Activated T-helper 1 cell treated with anti-CD3 and anti-CD28 coated beads, Interleukin-12 subunit alpha, Interleukin-12 subunit beta, Interleukin-2, Interleukin-4 antibody, amounts not matched to agents 30 ng/mL and 10 ng/mL and 1 ng/mL, durations not matched to agents 14 hours and 24 hours and 36 hours (primary cell): ENCODE measurements at regions of chr15 and their contacts with region 1.

Region 1: DNA sequence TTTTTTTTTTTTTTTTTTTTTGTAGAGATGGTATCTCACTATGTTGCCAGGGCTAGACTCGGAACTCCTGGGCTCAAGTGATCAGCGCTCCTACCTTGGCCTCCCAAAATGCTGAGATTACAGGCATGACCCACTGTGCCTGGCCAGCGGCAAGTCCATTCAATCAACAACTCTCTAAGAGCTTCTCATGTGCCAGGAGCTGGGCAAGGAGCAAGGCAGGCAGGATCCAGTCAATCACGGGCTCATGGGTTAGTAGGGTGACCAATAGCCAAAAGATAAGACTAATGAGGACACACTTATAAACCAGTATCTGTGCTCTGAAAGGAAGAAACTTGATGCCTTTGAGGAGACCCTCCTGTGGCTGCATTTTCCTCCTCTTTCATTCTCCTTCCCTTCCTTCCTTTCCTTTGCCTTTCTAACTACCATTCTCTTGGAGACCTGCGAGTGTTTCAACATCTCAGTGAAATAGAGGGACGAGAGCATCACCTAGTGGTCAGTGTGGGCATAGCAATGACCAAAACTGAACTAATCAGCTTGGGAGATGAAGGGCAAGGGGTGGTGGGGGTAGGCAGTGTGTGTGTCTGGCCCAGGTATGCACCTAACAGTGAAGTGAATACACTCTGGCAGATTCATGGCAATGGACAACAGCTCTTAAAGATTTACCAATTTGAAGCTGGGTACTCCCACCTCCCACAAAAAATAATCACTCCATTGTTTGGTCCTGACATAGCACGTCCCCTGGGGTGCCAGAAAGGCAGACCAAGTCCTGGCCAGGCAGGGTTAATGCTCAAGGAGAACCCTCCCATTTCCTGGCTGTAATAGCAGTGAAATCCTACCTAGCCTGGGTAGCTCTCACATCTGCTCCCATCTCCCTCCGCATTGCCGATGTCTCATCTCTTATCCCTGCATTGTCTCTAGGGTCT is 6.2 kb downstream of the RPP25 start:
- DNase-seq: peak; percentile 71
- H3K4me3 Mint-ChIP-seq: no peak overlapping the region
- H3K27ac Mint-ChIP-seq: no peak overlapping the region
- H3K4me1 Mint-ChIP-seq: peaks cover 11% of the 10 kb centered on the region
- H3K27me3 Mint-ChIP-seq: peaks cover 2% of the 10 kb centered on the region

Region 2: GRCh38 chr15:74433592-74434262 is 516.6 kb before region 1 on chr15 and contains the start of gene SEMA7A:
- intact Hi-C with region 1: no loop called
- DNase-seq: peak; percentile 82
- H3K4me3 Mint-ChIP-seq: peak within 1 kb of the TSS; percentile 97
- H3K27ac Mint-ChIP-seq: peak within 1 kb of the TSS; percentile 87
- H3K4me1 Mint-ChIP-seq: peaks cover 79% of the 10 kb centered on the region
- H3K27me3 Mint-ChIP-seq: no peaks in the 10 kb centered on the region
- total RNA-seq, gene SEMA7A: 102 TPM in 2 replicates

Region 3: DNA sequence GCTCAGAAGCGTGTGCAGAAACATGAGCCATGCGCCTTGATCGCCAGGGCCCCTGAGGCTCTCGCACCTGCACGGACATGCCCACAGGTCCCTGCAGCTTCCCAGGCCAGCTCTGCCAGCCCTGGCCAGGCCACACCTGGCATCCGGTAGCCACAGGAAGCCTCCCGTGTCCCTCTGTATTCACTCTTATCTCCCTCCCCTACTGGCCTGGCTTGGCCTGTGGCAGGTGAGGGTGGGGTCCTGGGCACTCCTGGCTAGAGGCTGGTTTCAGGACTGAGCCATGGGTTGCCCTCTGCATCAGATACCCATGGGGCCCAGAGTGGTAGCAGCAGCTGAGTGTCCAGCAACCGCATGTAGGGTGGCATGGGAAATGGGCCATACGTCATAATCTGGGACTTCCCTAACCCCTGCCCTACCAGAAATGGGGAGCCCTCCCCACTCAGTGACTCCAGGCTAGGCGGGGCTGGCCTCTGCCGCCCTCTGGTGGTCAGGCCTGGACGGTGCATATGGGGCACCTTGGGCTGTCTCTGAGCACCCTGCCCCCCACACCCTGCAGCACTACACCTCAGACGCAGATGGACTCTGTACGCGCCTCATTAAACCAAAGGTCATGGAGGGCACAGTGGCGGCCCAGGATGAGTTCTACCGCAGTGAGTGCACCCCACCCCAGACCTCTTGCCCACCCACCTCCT is 150.3 kb before region 1 on chr15:
- intact Hi-C with region 1: loop called (anchors 1 kb)
- DNase-seq: peak; percentile 82
- H3K4me3 Mint-ChIP-seq: peak overlapping the region; percentile 45
- H3K27ac Mint-ChIP-seq: peak overlapping the region; percentile 81
- H3K4me1 Mint-ChIP-seq: peaks cover 37% of the 10 kb centered on the region
- H3K27me3 Mint-ChIP-seq: no peaks in the 10 kb centered on the region

Region 4: DNA sequence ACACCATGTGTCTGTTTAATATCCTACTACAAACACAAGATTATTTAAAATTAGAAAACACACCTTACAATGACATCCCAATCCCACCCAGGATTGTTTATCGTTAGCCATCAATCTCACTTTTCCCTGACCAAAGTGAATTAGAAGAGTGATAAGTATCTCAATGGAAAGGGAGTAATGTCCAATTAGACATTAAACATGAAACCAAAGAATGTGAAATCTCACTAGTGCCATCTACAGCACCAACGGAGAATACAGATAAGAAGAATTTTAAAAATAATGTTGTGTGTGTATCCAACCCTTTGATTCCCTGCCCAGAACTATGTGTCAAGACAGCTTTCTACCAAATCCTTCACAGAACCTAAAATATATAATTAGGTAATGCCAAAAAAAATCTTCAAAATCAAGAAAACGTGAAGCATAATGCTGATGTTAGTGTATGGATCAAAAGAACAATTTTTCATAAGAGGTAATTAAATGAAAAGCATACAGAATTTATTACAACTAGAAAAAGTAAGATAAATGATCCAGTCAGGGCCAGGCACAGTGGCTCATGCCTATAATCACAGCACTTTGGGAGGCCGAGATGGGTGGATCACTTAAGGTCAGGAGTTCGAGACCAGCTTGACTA is 1890.6 kb after region 1 on chr15:
- intact Hi-C with region 1: no loop called
- DNase-seq: no peak
- H3K4me3 Mint-ChIP-seq: no peak overlapping the region
- H3K27ac Mint-ChIP-seq: no peak overlapping the region
- H3K4me1 Mint-ChIP-seq: peaks cover 9% of the 10 kb centered on the region
- H3K27me3 Mint-ChIP-seq: no peaks in the 10 kb centered on the region